A673 (cell line): ENCODE measurements at regions of chr9 and their contacts with region 1.

Region 1: DNA sequence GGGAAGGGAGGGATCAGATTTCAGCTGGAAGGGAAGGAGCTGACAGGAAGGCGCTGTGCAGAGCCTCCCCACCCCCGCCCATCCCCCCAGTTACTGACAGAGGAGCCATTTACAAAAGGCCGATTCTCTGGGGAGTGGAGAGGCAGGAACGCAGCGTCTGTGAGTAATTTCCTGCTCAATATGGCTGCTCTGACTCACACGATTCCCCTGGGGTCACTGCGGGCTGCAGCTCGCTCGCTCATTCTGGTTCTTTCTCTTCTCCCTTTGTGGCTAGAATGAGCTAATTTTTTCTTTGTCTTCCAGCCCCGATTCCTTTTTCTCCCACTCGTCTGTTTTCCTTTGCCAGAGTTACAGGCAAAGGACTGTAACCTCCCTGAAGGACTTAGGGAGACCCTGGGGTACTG is 28.8 kb downstream of the PTPA start:
- DNase-seq: peak; percentile 100
- H3K4me3 ChIP-seq: peak overlapping the region; percentile 41
- H3K27ac ChIP-seq: peak overlapping the region; percentile 100
- H3K4me1 ChIP-seq: peaks cover 49% of the 10 kb centered on the region
- H3K27me3 ChIP-seq: no peaks in the 10 kb centered on the region
- CTCF ChIP-seq: no peak

Region 2: GRCh38 chr9:129171940-129172339 is 31.9 kb after region 1 on chr9:
- CTCF ChIA-PET with region 1: interaction called, 7 read pairs
- POLR2A ChIA-PET with region 1: interaction called, 12 read pairs
- intact Hi-C with region 1: loop called (anchors 2 kb)
- DNase-seq: no peak
- H3K4me3 ChIP-seq: no peak overlapping the region
- H3K27ac ChIP-seq: no peak overlapping the region
- H3K4me1 ChIP-seq: peaks cover 28% of the 10 kb centered on the region
- H3K27me3 ChIP-seq: no peaks in the 10 kb centered on the region
- CTCF ChIP-seq: no peak

Region 3: DNA sequence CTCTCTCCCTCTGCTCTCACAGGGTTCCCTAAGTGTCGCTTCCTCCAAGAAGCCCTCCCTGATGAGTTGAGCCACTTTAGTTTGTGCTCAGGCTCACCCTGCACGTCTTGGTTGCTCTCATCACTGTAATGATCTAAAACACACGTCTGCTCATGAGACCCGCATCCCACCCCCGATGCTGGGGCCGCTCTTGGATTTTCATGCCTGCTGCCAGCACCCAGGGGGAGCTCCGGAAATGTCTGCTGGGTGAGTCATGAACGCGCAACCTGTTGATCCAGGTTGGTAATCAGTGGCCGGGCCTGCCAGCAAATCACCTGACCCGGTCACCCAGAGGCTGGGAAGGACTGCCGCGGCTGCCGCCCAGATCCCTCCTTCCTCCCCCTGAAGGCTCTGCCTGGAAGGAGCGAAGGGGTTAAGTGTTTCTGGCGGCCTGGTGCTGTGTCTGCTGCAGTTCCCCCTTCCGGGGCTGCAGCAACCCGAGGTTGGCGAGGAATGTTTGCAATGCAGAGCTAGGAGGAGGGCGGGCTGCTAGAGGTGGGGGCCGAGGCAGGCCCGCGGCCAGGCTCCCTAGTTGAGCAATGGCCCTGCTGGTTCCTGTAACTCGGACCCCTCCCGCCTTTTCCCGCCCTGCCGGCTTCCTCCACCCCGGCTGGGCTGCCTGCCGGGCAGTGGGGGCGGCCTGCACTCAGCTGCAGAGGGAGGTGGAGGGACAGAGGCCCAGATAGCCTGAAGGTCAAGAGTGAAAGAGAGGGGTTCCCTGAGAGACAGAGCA is 194.1 kb after region 1 on chr9:
- CTCF ChIA-PET with region 1: no interaction called
- POLR2A ChIA-PET with region 1: no interaction called
- intact Hi-C with region 1: loop called (anchors 10 kb)
- DNase-seq: peak; percentile 88
- H3K4me3 ChIP-seq: peak overlapping the region; percentile 10
- H3K27ac ChIP-seq: peak overlapping the region; percentile 85
- H3K4me1 ChIP-seq: peaks cover 44% of the 10 kb centered on the region
- H3K27me3 ChIP-seq: no peaks in the 10 kb centered on the region
- CTCF ChIP-seq: no peak

Region 4: DNA sequence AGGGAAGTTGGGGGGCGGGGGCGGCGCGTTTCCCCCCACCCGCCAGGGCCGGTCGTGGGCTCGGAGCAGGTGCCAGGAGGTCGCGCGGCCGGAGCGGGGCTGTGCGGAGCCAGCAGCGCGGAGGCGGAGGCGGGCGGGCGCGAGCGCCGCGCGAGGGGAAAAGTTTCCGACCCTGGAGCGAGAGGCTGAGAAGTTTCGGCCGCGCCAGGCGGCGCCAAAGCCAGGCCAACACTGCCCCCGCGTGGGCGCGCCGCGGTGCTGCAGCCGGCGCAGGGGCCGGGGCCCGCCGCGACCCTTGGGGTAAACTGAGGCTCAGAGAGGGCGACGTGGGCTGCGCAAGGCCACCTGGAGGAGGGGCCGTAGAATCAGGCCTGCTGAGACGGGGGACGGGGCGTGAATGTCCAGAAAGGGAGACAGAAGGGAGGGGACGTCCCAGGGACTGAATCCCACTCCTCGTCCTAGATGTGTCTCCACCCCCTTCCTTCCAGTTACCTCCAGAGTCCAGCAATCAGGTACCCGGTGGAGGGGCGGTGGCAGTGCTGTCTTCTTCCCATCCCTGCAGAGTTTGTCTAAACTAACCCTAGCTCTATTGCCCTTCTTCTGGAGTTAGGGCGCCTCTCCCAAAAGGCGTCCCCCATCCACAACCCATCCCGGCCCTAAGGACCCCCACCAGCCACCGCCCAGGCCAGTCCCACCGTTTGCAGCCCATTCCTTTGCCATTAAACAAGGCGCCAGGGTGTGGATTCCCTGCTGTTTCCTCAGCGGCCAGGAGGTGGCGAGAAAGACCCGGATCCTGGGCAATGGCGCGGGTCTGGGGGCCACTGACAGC is 470.7 kb after region 1 on chr9:
- CTCF ChIA-PET with region 1: interaction called, 5 read pairs
- POLR2A ChIA-PET with region 1: no interaction called
- intact Hi-C with region 1: loop called (anchors 1 kb)
- DNase-seq: peak; percentile 83
- H3K4me3 ChIP-seq: peak overlapping the region; percentile 81
- H3K27ac ChIP-seq: peak overlapping the region; percentile 88
- H3K4me1 ChIP-seq: peaks cover 46% of the 10 kb centered on the region
- H3K27me3 ChIP-seq: no peaks in the 10 kb centered on the region
- CTCF ChIP-seq: peak; percentile 62

Region 5: GRCh38 chr9:129641746-129642513 is 501.9 kb after region 1 on chr9 and contains the start of gene ASB6:
- CTCF ChIA-PET with region 1: interaction called, 12 read pairs
- POLR2A ChIA-PET with region 1: interaction called, 4 read pairs
- intact Hi-C with region 1: loop called (anchors 1 kb)
- DNase-seq: peak; percentile 92
- H3K4me3 ChIP-seq: peak within 1 kb of the TSS; percentile 91
- H3K27ac ChIP-seq: peak within 1 kb of the TSS; percentile 85
- H3K4me1 ChIP-seq: peaks cover 14% of the 10 kb centered on the region
- H3K27me3 ChIP-seq: no peaks in the 10 kb centered on the region
- CTCF ChIP-seq: peak; percentile 99
- total RNA-seq, gene ASB6: 30.4 and 36.5 TPM in 2 replicates